ENCODE measurements at regions of chr4 and their contacts with region 1.

Region 1: GRCh38 chr4:108620101-108620932 is at the start of gene RPL34:
- DNase-seq: peak; percentile 96
- H3K4me3 Mint-ChIP-seq: peak within 1 kb of the TSS; percentile 98
- H3K27ac Mint-ChIP-seq: peak within 1 kb of the TSS; percentile 97
- H3K4me1 Mint-ChIP-seq: peaks cover 43% of the 10 kb centered on the region
- H3K27me3 Mint-ChIP-seq: no peaks in the 10 kb centered on the region
- total RNA-seq, gene RPL34: 1,258 and 1,304 TPM in 2 replicates

Region 2: DNA sequence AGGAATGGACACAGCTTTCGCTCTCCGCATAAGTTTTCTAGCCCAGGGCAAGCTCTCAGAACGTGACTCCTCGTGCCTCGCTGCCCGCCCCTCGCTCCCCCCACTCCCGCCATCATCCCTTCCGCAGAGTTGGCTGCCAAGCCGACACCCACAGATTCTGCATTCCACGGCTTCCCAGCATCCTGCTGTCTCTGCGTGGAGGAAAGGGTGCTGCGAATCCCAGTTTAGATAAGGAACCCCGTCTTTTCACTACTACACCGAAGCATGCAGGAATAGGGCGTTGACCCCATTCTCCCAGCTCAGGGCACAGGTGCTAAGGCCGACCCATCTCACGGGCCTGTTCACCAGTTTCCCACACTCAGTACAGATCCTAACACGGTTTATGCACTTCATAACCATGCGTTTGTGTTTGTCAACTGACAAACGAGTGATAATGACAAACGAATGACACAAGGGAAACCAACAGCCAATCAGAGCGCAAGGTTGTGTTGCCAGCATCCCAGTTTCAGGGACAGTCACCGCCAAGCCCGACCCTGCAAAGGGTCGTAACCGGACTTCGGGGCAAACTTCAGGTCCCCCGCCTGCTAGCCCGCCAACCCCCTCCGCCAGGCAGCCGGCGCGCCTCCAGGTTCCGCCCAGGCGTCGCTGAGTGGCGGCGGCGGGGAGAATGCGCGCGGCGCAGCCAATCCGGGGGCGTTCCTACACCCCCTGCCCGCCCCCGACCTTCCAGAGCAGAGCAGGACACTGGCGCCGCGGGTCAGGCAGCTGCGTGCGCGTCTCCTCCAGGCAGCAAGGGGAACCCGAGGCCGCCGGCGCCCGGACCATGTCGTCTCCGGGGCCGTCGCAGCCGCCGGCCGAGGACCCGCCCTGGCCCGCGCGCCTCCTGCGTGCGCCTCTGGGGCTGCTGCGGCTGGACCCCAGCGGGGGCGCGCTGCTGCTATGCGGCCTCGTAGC is 689.2 kb before region 1 on chr4 and contains the start of gene CYP2U1:
- intact Hi-C with region 1: loop called (anchors 5 kb)
- DNase-seq: peak; percentile 81
- H3K4me3 Mint-ChIP-seq: peak within 1 kb of the TSS; percentile 86
- H3K27ac Mint-ChIP-seq: peak within 1 kb of the TSS; percentile 82
- H3K4me1 Mint-ChIP-seq: peaks cover 20% of the 10 kb centered on the region
- H3K27me3 Mint-ChIP-seq: peaks cover 2% of the 10 kb centered on the region
- total RNA-seq, gene CYP2U1: 1.1 and 1.5 TPM in 2 replicates

Region 3: DNA sequence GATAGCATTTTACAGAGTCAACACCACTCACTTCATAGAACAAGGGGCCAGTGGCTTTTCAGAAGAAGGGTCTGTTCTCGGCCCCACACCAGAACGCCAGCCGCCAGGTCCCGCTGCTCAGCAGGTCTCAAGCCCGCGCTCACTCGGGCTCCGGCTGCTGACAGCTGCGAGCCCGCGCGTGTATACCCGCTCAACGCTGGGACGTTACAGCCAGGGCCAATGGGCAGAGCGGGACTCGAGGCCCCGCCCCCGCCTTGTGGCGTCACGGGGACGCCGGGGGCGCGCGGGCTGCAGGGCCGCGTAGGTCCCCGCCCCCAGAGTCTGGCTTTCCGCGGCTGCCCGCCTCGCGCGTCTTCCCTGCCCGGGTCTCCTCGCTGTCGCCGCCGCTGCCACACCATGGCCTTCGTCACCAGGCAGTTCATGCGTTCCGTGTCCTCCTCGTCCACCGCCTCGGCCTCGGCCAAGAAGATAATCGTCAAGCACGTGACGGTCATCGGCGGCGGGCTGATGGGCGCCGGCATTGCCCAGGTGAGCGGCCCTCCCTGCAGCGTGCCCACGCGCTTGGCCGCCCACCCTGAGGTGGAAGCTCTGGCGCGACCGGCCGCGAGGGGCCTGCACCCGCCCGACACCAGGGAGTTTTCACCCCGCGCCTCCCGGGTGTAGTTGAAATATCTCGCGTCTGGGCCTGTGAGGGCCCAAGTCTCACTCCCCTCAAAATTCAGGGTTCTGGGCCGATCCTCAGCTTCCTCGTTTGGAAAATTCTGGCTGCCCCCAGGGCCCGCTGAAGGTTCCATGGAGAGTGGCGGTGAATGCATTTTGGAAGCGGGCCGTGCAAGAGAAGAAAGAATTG is 630.6 kb before region 1 on chr4 and contains the start of gene HADH:
- intact Hi-C with region 1: loop called (anchors 1 kb)
- DNase-seq: peak; percentile 95
- H3K4me3 Mint-ChIP-seq: peak within 1 kb of the TSS; percentile 97
- H3K27ac Mint-ChIP-seq: peak within 1 kb of the TSS; percentile 96
- H3K4me1 Mint-ChIP-seq: peaks cover 57% of the 10 kb centered on the region
- H3K27me3 Mint-ChIP-seq: no peaks in the 10 kb centered on the region
- total RNA-seq, gene HADH: 33.9 and 36.8 TPM in 2 replicates

Region 4: GRCh38 chr4:108118490-108118889 is 501.8 kb before region 1 on chr4:
- intact Hi-C with region 1: loop called (anchors 5 kb)
- DNase-seq: no peak
- H3K4me3 Mint-ChIP-seq: peak overlapping the region; percentile 74
- H3K27ac Mint-ChIP-seq: peak overlapping the region; percentile 89
- H3K4me1 Mint-ChIP-seq: peaks cover 93% of the 10 kb centered on the region
- H3K27me3 Mint-ChIP-seq: no peaks in the 10 kb centered on the region

Region 5: GRCh38 chr4:108533245-108533844 is 87.0 kb before region 1 on chr4:
- intact Hi-C with region 1: loop called (anchors 5 kb)
- DNase-seq: no peak
- H3K4me3 Mint-ChIP-seq: peak overlapping the region; percentile 41
- H3K27ac Mint-ChIP-seq: peak overlapping the region; percentile 40
- H3K4me1 Mint-ChIP-seq: peaks cover 84% of the 10 kb centered on the region
- H3K27me3 Mint-ChIP-seq: no peaks in the 10 kb centered on the region

Region 6: DNA sequence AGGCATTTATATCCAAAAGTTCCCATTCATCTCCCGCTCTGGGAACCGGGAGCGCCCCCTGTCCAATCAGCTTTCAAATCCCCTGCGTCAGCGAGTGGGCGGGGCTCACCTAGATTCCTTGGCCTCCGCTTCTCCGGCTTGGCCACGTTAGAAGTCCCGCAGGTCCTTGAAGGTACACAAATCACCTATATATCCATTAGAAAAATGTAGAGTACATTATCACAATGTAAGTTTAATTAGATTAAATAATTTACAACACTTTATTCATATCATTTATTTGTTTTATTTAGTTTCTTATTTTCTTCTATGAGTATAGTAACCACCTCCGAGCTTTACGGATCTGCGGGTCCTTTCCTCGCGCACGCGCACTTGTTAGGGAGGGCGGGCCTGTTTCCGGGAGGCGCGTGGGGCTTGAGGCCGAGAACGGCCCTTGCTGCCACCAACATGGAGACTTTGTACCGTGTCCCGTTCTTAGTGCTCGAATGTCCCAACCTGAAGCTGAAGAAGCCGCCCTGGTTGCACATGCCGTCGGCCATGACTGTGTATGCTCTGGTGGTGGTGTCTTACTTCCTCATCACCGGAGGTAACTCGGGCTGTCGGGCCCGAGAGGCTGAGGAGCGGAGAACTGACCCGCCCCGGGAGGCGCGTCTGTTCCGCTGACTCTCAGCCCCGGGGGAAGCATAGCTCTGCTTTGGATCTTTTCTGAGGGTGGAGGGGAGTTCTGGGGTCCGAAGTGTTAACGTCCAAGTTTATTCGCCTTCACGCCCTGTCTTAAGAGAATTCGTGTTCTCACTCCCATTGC is 30.1 kb after region 1 on chr4 and contains the start of gene OSTC:
- intact Hi-C with region 1: loop called (anchors 1 kb)
- DNase-seq: peak; percentile 90
- H3K4me3 Mint-ChIP-seq: peak within 1 kb of the TSS; percentile 99
- H3K27ac Mint-ChIP-seq: peak within 1 kb of the TSS; percentile 93
- H3K4me1 Mint-ChIP-seq: peaks cover 39% of the 10 kb centered on the region
- H3K27me3 Mint-ChIP-seq: no peaks in the 10 kb centered on the region
- total RNA-seq, gene OSTC: 96.1 and 96.7 TPM in 2 replicates

Region 7: DNA sequence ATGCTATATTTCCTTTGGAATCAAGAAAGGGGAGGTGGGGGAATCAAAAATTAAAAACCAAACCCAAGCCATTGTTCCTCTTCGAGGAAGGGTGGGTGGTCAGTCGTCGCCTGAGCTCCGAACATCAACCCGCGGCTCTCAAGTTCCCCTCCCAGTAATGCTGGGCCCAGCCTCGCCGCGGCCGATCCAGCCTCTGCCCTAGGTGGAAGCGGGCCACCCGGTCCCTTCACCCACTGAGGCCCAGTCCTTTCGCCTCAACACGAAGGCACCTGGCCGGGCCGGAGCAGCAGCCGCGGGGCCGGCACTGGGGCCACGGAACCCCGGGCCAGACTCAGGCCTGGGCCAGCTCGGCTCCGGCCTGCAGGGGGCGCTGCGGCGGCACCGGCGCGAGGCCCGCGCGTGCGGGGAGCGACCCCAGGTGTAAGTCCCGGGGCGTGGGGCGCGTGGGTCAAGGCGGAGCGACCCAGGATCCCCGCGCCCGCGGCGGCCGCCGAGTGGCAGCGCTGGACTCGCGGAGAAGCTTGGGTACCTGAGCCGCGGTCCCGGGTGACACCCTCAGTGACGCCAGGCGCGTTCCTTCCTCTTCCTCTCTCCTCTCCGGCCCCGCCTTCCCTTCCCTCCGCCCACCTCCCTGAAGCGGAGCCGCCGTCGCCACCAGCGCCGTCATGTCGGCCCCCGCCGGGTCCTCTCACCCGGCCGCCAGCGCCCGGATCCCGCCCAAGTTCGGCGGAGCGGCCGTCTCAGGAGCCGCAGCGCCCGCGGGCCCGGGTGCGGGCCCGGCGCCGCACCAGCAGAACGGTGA is 813.1 kb after region 1 on chr4 and contains the start of gene SEC24B:
- intact Hi-C with region 1: loop called (anchors 1 kb)
- DNase-seq: peak; percentile 86
- H3K4me3 Mint-ChIP-seq: peak within 1 kb of the TSS; percentile 87
- H3K27ac Mint-ChIP-seq: peak within 1 kb of the TSS; percentile 79
- H3K4me1 Mint-ChIP-seq: peaks cover 57% of the 10 kb centered on the region
- H3K27me3 Mint-ChIP-seq: no peaks in the 10 kb centered on the region
- total RNA-seq, gene SEC24B: 32.5 and 34.0 TPM in 2 replicates

Measured in activated T-helper 1 cell treated with anti-CD3 and anti-CD28 coated beads, Interleukin-12 subunit alpha, Interleukin-12 subunit beta, Interleukin-2, Interleukin-4 antibody, amounts not matched to agents 30 ng/mL and 10 ng/mL and 1 ng/mL, durations not matched to agents 14 hours and 24 hours and 36 hours (primary cell).